Psoas muscle (tissue), 8 donors: ENCODE measurements at regions of chr7 and their contacts with region 1.

Region 1: GRCh38 chr7:151782598-151783448 is 94.1 kb downstream of the PRKAG2 start:
- DNase-seq: peak; percentile 81 to 87
- ATAC-seq: peak; percentile 83 to 92 (median 89)
- H3K4me3 ChIP-seq: peak overlapping the region; percentile 53
- H3K27ac ChIP-seq: no peak overlapping the region
- H3K4me1 ChIP-seq: peaks cover 8% of the 10 kb centered on the region
- H3K27me3 ChIP-seq: no peaks in the 10 kb centered on the region
- CTCF ChIP-seq: peak; percentile 85

Region 2: DNA sequence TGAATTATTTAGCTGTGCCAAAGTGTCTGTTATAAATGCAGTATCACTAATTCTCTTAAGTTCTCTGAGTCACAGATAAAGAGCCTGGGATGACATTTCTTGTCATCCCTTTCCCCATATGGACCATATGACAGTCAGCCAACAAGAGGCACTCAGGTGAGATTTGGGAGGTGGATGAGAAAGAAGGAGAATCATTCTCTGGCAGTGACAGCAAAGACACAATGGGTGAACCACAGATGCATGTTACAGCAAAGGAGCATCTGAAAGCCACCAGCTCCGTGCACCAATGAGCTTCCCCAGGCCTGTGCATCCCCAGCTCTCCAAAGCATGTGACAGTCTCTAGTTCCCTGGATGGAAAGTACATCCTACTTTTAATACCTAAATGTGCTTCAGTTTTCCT is 1161.4 kb before region 1 on chr7:
- intact Hi-C with region 1: no loop called
- DNase-seq: no peak
- ATAC-seq: no peak
- H3K4me3 ChIP-seq: no peak overlapping the region
- H3K27ac ChIP-seq: no peak overlapping the region
- H3K4me1 ChIP-seq: no peaks in the 10 kb centered on the region
- H3K27me3 ChIP-seq: no peaks in the 10 kb centered on the region
- CTCF ChIP-seq: no peak

Region 3: DNA sequence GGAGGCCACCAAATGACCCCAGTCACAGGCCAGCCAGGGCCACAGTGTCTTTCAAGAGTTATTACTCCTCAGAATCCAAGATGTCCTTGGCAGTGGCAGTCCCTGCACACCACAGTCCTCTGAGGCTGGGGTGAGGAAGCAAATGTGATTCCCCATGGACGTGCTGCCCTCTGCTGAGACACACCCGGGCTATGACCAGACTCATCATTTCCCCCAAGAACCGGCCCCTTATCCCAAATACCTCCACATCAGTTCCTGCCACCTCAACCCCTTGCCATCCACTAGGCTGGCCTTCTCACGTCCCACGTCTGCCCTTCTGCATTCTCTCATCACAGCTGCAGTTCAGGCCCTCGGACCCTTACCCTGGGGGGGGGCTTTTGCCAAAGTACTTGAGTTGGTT is 89.1 kb after region 1 on chr7:
- intact Hi-C with region 1: loop called in 1 of 2 experiments (anchors 5 kb)
- DNase-seq: peak in 1 of 2 donors; percentile 19
- ATAC-seq: no peak
- H3K4me3 ChIP-seq: no peak overlapping the region
- H3K27ac ChIP-seq: no peak overlapping the region
- H3K4me1 ChIP-seq: peaks cover 12% of the 10 kb centered on the region
- H3K27me3 ChIP-seq: no peaks in the 10 kb centered on the region
- CTCF ChIP-seq: no peak

Region 4: DNA sequence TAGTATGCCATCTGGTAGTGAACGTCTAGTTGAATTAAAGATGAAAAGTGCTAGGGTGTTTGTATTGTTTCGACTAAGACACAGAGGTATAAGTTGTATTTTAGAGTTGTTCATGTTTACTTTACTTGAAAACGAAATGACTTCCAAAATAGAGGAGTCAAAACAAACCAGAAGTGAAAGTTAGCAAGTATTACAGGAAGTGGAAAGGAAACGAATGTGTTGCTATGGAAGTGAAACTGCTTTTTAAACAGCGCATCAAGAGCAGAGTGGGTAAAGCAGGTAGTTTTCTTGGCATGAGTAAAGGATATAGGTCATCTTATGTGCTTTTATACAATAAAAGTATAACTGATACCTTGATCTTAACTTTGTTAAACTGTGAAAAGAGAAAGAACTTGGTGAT is 153.4 kb after region 1 on chr7:
- intact Hi-C with region 1: loop called in 1 of 2 experiments (anchors 5 kb)
- DNase-seq: no peak
- ATAC-seq: no peak
- H3K4me3 ChIP-seq: no peak overlapping the region
- H3K27ac ChIP-seq: no peak overlapping the region
- H3K4me1 ChIP-seq: no peaks in the 10 kb centered on the region
- H3K27me3 ChIP-seq: peaks cover 0 to 9% (median 0%) of the 10 kb centered on the region in 3 donors
- CTCF ChIP-seq: no peak

Region 5: DNA sequence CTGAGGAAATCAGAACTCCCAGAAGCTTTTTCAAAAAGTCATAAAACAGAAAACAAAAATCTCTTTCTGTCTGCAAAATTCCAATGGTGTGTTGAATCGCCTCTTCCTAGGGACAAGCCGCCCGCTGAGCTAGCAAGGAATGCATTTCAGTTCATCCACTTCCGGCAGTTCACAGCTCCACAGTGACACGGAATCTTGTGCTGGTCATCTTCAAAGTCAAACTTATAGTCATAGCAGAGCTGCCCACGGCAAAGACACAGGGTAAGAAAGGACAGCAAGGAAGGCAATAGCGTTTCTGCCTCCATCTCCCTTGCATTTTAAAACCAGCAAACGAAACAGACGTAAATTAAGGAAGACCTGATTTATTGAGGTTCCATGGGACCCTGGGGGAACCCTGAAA is 353.9 kb after region 1 on chr7:
- intact Hi-C with region 1: no loop called
- DNase-seq: no peak
- ATAC-seq: peak in 1 of 4 donors; percentile 26
- H3K4me3 ChIP-seq: no peak overlapping the region
- H3K27ac ChIP-seq: no peak overlapping the region
- H3K4me1 ChIP-seq: no peaks in the 10 kb centered on the region
- H3K27me3 ChIP-seq: no peaks in the 10 kb centered on the region
- CTCF ChIP-seq: no peak